Mammary epithelial cell (primary cell): ENCODE measurements at regions of chr2 and their contacts with region 1.

Region 1: GRCh38 chr2:196660244-196660643 is 20.7 kb downstream of the CCDC150 start:
- DNase-seq: peak; percentile 12
- H3K4me3 ChIP-seq: no peak overlapping the region
- H3K27ac ChIP-seq: no peak overlapping the region
- H3K4me1 ChIP-seq: no peaks in the 10 kb centered on the region
- H3K27me3 ChIP-seq: no peaks in the 10 kb centered on the region
- CTCF ChIP-seq: no peak

Region 2: DNA sequence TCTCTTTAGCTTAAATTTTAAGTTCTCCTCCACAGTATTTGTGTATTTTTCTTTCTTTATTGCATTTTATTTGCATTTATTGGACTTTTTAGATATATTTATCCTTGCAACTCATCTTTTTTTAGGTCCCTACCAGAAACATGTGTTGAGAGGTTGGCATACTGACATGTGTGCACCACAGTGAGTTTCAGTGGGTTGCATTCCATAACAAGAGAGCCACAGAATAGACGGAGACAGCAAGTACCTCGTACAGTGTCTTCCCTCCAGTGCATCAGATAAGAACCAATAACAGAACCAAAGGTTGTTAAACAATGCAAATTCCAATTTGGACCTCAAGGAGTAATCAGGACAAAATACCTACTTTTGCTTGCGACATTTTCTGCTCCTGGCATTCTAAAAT is 703.5 kb before region 1 on chr2:
- CTCF ChIA-PET with region 1: interaction called, 11 read pairs
- dilution Hi-C with region 1: no loop called
- in situ Hi-C with region 1: no loop called
- intact Hi-C with region 1: no loop called
- DNase-seq: no peak
- H3K4me3 ChIP-seq: no peak overlapping the region
- H3K27ac ChIP-seq: no peak overlapping the region
- H3K4me1 ChIP-seq: no peaks in the 10 kb centered on the region
- H3K27me3 ChIP-seq: peaks cover 4% of the 10 kb centered on the region
- CTCF ChIP-seq: no peak